ENCODE measurements at regions of chr19 and their contacts with region 1.

Region 1: DNA sequence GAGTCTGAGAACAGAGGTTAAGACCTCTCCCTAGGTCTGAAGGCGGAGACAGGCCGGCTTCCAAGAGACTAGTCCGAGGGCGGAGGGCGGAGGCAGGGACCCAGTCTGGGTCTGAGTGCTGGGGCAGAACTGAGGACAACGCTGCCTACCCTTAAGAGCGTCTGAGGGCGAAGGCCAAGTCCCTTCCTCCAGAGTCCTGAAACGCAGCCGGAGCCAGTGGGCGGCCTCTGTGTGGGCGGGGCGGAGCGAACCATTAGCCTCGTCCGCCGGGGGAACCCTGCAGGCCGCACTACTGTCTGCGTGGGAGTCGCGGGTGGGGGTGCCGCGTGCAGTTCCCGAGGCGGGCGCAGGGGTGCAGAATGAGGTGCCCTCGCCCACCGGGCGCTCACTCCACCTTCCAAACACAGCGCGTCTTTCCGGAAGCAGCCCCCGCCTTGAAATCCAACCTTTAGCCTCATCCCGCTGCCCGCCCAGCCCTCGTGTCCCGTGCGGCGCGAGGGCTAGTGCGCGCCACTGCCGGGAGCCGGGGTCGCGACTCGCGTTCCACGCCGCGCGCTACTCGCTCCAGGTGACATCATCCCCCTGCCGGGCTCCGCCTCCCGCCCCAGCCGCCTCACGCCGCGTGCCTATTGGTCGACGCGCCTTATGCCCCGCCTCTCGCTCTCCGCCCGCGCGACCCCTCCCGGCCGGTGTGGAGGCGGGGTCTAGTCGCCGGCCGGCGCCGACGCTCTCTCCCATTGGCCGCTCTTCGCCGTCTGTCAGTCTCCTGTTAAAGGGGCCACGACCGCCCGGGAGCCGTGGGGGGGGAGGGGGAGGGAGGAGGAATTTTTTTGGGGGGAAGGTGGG is at the start of gene C19orf73:
- DNase-seq: peak; percentile 99
- ATAC-seq: peak; percentile 81
- H3K4me3 ChIP-seq: peak within 1 kb of the TSS; percentile 39 to 88 (median 62)
- H3K4me3 Mint-ChIP-seq: peak within 1 kb of the TSS; percentile 90
- H3K27ac ChIP-seq: peak within 1 kb of the TSS; percentile 93 to 95
- H3K27ac Mint-ChIP-seq: peak within 1 kb of the TSS; percentile 93
- H3K4me1 ChIP-seq: peaks cover 22 to 33% of the 10 kb centered on the region in 2 donors
- H3K4me1 Mint-ChIP-seq: peaks cover 41% of the 10 kb centered on the region
- H3K27me3 ChIP-seq: peaks cover 0 to 11% (median 2%) of the 10 kb centered on the region in 4 experiments
- H3K27me3 Mint-ChIP-seq: peaks cover 6% of the 10 kb centered on the region
- CTCF ChIP-seq: peak; percentile 53
- total RNA-seq, gene C19orf73: 3.9 and 5.3 TPM in 2 replicates

Region 2: DNA sequence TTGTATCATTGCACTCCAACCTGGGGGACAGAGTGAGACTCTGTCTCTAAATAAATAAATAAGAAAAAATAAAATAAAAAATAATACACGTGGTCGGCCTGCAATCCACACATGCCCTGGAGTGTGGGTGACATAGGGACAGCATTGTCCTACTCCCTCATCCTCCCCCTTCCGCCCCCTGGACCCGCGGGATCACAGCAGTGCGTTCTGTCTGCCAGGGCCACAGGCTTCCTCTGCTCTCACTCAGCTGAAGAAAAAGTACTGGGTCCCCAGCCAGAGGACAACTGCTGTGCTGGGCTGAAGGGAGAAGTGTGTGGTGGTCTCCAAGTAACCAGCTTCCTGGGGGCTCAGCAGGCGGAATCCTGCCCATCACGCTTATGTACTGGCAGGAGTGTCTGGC is 314.3 kb before region 1 on chr19:
- CTCF ChIA-PET with region 1: no interaction called
- POLR2A ChIA-PET with region 1: no interaction called
- intact Hi-C with region 1: no loop called
- DNase-seq: no peak
- ATAC-seq: no peak
- H3K4me3 ChIP-seq: no peak overlapping the region
- H3K4me3 Mint-ChIP-seq: no peak overlapping the region
- H3K27ac ChIP-seq: no peak overlapping the region
- H3K27ac Mint-ChIP-seq: no peak overlapping the region
- H3K4me1 ChIP-seq: no peaks in the 10 kb centered on the region
- H3K4me1 Mint-ChIP-seq: peaks cover 9% of the 10 kb centered on the region
- H3K27me3 ChIP-seq: no peaks in the 10 kb centered on the region
- H3K27me3 Mint-ChIP-seq: no peaks in the 10 kb centered on the region
- CTCF ChIP-seq: no peak

Region 3: GRCh38 chr19:49085020-49085867 is 33.5 kb before region 1 on chr19 and contains the start of gene SNRNP70:
- CTCF ChIA-PET with region 1: no interaction called
- POLR2A ChIA-PET with region 1: no interaction called
- intact Hi-C with region 1: loop called (anchors 1 kb)
- DNase-seq: peak; percentile 100
- ATAC-seq: peak; percentile 95
- H3K4me3 ChIP-seq: peak within 1 kb of the TSS; percentile 74 to 89 (median 82)
- H3K4me3 Mint-ChIP-seq: peak within 1 kb of the TSS; percentile 93
- H3K27ac ChIP-seq: peak within 1 kb of the TSS; percentile 66 to 90
- H3K27ac Mint-ChIP-seq: peak within 1 kb of the TSS; percentile 87
- H3K4me1 ChIP-seq: peaks cover 20 to 28% of the 10 kb centered on the region in 2 donors
- H3K4me1 Mint-ChIP-seq: peaks cover 33% of the 10 kb centered on the region
- H3K27me3 ChIP-seq: peaks cover 0 to 3% (median 0%) of the 10 kb centered on the region in 4 experiments
- H3K27me3 Mint-ChIP-seq: peaks cover 5% of the 10 kb centered on the region
- CTCF ChIP-seq: no peak
- total RNA-seq, gene SNRNP70: 598 and 610 TPM in 2 replicates

Region 4: GRCh38 chr19:49097455-49098288 is 21.1 kb before region 1 on chr19:
- CTCF ChIA-PET with region 1: interaction called, 23 read pairs
- POLR2A ChIA-PET with region 1: no interaction called
- intact Hi-C with region 1: loop called (anchors 2 kb)
- DNase-seq: peak; percentile 84
- ATAC-seq: peak; percentile 95
- H3K4me3 ChIP-seq: no peak overlapping the region
- H3K4me3 Mint-ChIP-seq: no peak overlapping the region
- H3K27ac ChIP-seq: no peak overlapping the region
- H3K27ac Mint-ChIP-seq: no peak overlapping the region
- H3K4me1 ChIP-seq: no peaks in the 10 kb centered on the region
- H3K4me1 Mint-ChIP-seq: peaks cover 4% of the 10 kb centered on the region
- H3K27me3 ChIP-seq: no peaks in the 10 kb centered on the region
- H3K27me3 Mint-ChIP-seq: no peaks in the 10 kb centered on the region
- CTCF ChIP-seq: peak; percentile 99

Region 5: DNA sequence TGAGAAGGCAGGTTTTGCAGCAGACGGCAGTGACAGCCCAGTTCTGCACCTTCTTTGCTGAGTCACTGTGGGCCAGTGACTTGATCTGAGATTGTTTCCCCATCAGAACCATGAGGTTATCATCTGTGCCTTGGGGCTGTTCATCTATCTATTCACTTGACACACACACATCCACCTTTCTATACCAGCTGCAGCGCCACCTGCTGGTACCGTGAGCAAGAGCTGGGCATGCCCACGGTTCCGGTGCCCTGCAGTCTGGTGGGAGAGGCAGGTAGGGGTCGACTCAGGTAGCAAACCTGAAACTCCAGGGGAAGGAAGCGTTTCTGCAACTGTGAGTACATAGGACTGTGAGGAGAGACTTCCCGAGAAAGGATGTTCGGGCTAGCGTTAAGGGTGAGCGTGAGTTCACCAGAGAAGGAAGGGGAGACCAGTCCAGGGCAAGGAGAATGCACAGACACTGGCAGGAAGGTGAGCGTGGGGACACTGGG is 12.1 kb before region 1 on chr19:
- CTCF ChIA-PET with region 1: interaction called, 33 read pairs
- POLR2A ChIA-PET with region 1: interaction called, 10 read pairs
- intact Hi-C with region 1: no loop called
- DNase-seq: peak; percentile 76
- ATAC-seq: peak; percentile 70
- H3K4me3 ChIP-seq: no peak overlapping the region
- H3K4me3 Mint-ChIP-seq: no peak overlapping the region
- H3K27ac ChIP-seq: no peak overlapping the region
- H3K27ac Mint-ChIP-seq: no peak overlapping the region
- H3K4me1 ChIP-seq: peaks cover 13 to 14% of the 10 kb centered on the region in 2 donors
- H3K4me1 Mint-ChIP-seq: peaks cover 10% of the 10 kb centered on the region
- H3K27me3 ChIP-seq: no peaks in the 10 kb centered on the region
- H3K27me3 Mint-ChIP-seq: no peaks in the 10 kb centered on the region
- CTCF ChIP-seq: peak; percentile 88

Region 6: GRCh38 chr19:49148784-49149651 is 30.2 kb after region 1 on chr19:
- CTCF ChIA-PET with region 1: interaction called, 11 read pairs
- POLR2A ChIA-PET with region 1: interaction called, 8 read pairs
- intact Hi-C with region 1: loop called (anchors 5 kb)
- DNase-seq: peak; percentile 82
- ATAC-seq: peak; percentile 53
- H3K4me3 ChIP-seq: peak overlapping the region in 4 of 5 experiments; percentile 57 to 76 (median 61)
- H3K4me3 Mint-ChIP-seq: peak overlapping the region; percentile 89
- H3K27ac ChIP-seq: no peak overlapping the region
- H3K27ac Mint-ChIP-seq: no peak overlapping the region
- H3K4me1 ChIP-seq: peaks cover 44 to 48% of the 10 kb centered on the region in 2 donors
- H3K4me1 Mint-ChIP-seq: peaks cover 42% of the 10 kb centered on the region
- H3K27me3 ChIP-seq: peaks cover 0 to 81% (median 38%) of the 10 kb centered on the region in 4 experiments
- H3K27me3 Mint-ChIP-seq: peaks cover 57% of the 10 kb centered on the region
- CTCF ChIP-seq: no peak

Region 7: DNA sequence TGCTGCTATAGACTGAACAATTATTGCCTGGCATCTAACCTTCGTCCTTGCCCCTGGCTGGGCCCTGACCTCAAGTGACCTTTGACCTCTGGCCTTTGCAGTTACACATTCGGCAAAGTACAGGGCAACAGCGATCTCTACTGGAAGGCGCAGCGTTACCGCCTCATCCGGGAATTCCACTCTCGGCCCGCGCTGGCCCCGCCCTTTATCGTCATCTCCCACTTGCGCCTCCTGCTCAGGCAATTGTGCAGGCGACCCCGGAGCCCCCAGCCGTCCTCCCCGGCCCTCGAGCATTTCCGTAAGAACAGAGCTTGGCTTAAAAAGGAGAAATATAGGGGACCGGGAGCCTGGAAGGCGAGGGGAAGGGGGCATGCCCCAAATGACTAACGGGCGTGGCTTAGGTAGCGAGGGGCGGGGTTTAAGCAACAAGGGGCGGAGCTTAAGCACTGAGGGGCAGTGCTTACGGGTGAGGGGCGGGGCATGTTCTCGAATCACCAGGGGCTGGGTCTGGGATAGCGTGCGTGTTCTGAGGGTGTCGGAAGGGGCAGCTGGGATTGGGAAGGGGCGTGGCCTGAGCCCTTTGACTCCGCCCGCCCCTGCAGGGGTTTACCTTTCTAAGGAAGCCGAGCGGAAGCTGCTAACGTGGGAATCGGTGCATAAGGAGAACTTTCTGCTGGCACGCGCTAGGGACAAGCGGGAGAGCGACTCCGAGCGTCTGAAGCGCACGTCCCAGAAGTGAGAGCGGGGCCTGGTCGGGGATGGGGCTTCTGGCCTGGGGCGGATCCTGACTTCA is 91.5 kb after region 1 on chr19:
- CTCF ChIA-PET with region 1: interaction called, 11 read pairs
- POLR2A ChIA-PET with region 1: no interaction called
- intact Hi-C with region 1: no loop called
- DNase-seq: peak; percentile 62
- ATAC-seq: peak; percentile 67
- H3K4me3 ChIP-seq: no peak overlapping the region
- H3K4me3 Mint-ChIP-seq: peak overlapping the region; percentile 18
- H3K27ac ChIP-seq: no peak overlapping the region
- H3K27ac Mint-ChIP-seq: peak overlapping the region; percentile 61
- H3K4me1 ChIP-seq: peaks cover 12 to 37% of the 10 kb centered on the region in 2 donors
- H3K4me1 Mint-ChIP-seq: peaks cover 41% of the 10 kb centered on the region
- H3K27me3 ChIP-seq: no peaks in the 10 kb centered on the region
- H3K27me3 Mint-ChIP-seq: no peaks in the 10 kb centered on the region
- CTCF ChIP-seq: no peak